Heart left ventricle (tissue), 16 donors: ENCODE measurements at regions of chr9 and their contacts with region 1.

Region 1: DNA sequence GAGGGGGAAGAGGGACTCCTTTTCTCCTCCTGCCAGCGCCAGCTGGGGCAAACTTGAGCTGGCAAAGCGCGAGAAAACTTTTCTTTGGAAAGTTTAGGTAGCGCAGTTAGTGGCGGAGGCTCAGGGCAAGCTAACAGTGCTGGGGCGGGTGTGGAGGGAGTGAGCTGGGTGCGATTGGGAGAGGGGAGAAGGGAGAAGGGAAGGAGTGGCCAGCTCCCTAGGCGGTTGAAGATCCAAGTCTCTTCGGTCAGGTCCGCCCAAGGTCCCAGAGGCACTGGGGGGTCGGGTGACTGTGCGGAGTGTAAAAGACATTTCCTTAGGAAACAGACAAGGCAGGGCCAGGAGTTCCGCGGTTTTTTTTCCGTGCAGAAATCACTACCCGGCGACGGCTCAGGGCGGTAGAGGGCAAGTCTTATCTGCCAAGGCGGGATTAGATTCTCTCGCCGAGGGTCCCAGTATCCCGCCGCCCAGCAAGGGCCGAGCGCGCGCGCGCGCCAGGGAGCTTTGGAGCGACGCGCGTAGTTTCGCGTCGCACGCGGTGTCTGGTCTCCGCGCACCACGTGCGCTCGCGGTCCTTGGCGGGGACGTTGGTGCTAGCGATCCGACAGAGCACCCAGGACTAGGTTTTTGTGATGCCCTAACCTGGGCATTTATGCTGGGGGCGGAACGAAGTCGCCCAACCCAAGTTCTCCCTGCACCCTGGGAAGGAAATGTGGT is 33.6 kb upstream of the NFIB start:
- DNase-seq: peak; percentile 63 to 76 (median 69)
- ATAC-seq: peak; percentile 36 to 59 (median 50)
- H3K4me3 ChIP-seq: peak overlapping the region; percentile 41 to 72 (median 59)
- H3K27ac ChIP-seq: peak overlapping the region; percentile 76 to 94 (median 87)
- H3K4me1 ChIP-seq: peaks cover 11 to 73% (median 42%) of the 10 kb centered on the region in 12 donors
- H3K27me3 ChIP-seq: peaks cover 0 to 50% (median 0%) of the 10 kb centered on the region in 9 donors
- CTCF ChIP-seq: peak in 3 of 12 donors; percentile 19 to 52 (median 52)
- POLR2A ChIP-seq: peak in 1 of 2 donors; percentile 52

Region 2: DNA sequence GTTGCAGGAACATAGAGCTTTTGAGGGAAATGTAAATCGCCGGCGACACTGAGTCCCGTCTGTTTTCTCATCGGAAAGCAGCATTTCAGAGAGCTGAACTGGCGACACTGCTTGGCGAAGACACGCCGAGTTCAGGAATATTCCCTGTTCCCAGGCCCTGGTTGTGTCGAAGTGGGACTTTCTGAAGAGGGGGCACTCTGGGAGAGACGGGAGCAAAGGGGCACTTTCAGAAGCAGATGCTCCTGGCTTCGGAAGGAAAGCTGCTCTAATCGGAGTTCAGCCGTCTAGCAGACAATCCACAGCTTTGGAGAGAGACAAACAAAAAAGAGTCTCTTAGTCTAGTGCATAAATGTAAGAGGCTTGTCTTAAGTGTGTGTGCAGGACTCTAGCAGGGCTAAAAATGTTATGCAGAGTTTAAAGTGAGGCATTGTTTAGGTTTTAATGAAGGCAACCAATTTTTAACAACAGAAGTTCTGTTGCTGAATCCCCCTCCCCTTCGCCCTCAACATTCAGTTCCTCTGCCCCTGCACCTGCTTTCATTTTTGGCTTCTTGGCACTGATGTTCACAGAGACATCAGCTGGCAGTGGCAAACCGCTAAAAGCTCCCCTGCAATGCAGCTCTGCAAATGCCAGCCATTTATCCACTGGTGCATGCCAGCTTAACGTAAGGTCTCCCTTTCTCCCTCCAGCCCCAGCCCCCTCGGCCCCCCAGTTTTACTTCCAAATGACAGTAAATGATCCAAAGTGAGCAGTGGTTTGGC is 778.5 kb before region 1 on chr9:
- intact Hi-C with region 1: loop called in 2 of 10 experiments (anchors 10 kb)
- DNase-seq: peak in 3 of 5 donors; percentile 30 to 55 (median 34)
- ATAC-seq: peak; percentile 25 to 49 (median 29)
- H3K4me3 ChIP-seq: peak overlapping the region in 10 of 12 donors; percentile 21 to 46 (median 35)
- H3K27ac ChIP-seq: peak overlapping the region; percentile 53 to 92 (median 82)
- H3K4me1 ChIP-seq: peaks cover 0 to 46% (median 31%) of the 10 kb centered on the region in 12 donors
- H3K27me3 ChIP-seq: no peaks in the 10 kb centered on the region
- CTCF ChIP-seq: no peak
- POLR2A ChIP-seq: no peak

Region 3: DNA sequence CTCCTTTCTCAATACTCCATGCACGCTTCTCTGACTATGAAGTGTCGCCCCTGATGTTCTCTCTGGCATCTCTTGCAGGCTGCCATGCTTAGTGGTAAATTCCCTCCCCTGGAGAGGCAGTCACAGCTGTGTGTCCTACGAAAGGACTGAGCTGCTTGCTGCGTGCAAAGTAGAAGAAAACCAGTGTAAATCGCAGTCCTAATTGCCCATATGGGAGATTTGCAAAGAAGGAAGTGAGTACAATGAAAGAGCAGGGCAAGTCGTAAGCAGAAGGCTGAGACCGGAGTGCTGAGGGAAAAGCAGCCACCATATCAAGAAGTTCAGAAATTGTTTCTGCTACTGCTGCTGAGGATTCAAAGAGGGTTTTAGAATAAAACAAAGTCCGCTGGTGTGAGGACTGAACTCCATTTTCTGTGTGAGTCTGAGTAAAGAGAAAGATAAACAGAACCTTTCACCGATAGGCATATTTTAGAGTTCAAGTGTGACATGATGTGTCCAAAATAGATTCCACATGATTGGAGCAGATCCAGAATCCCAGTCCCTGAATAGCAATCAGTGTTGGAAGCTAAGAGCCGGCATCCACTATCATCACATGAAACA is 560.2 kb before region 1 on chr9:
- intact Hi-C with region 1: loop called in 2 of 10 experiments (anchors 10 kb)
- DNase-seq: peak in 3 of 5 donors; percentile 43 to 73 (median 61)
- ATAC-seq: peak; percentile 72 to 92 (median 88)
- H3K4me3 ChIP-seq: peak overlapping the region in 10 of 12 donors; percentile 5 to 50 (median 31)
- H3K27ac ChIP-seq: peak overlapping the region; percentile 81 to 95 (median 88)
- H3K4me1 ChIP-seq: peaks cover 0 to 43% (median 21%) of the 10 kb centered on the region in 12 donors
- H3K27me3 ChIP-seq: no peaks in the 10 kb centered on the region
- CTCF ChIP-seq: no peak
- POLR2A ChIP-seq: no peak

Region 4: DNA sequence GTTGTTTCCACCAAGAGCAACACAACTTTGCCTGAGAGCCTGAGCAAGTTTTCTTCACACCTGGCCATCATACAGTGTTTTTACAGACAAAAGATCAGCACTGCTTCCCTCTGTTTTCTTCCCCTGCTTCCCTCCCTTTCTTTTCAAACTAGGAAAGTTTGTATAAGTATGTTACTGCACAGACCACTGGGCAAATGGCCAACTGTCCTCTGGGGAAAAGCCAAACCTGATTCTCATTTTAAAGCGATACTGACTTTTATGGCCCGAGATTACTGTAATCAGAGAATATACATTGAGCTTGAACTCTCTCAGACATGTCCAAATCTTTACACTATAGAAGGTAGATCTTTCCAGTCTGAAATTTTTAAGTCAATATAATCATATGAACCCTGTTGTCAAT is 448.6 kb before region 1 on chr9:
- intact Hi-C with region 1: loop called in 2 of 10 experiments (anchors 5 kb)
- DNase-seq: peak in 4 of 5 donors; percentile 30 to 44 (median 36)
- ATAC-seq: no peak
- H3K4me3 ChIP-seq: no peak overlapping the region
- H3K27ac ChIP-seq: peak overlapping the region in 11 of 12 donors; percentile 42 to 84 (median 66)
- H3K4me1 ChIP-seq: peaks cover 6 to 66% (median 24%) of the 10 kb centered on the region in 12 donors
- H3K27me3 ChIP-seq: no peaks in the 10 kb centered on the region
- CTCF ChIP-seq: no peak
- POLR2A ChIP-seq: no peak

Region 5: DNA sequence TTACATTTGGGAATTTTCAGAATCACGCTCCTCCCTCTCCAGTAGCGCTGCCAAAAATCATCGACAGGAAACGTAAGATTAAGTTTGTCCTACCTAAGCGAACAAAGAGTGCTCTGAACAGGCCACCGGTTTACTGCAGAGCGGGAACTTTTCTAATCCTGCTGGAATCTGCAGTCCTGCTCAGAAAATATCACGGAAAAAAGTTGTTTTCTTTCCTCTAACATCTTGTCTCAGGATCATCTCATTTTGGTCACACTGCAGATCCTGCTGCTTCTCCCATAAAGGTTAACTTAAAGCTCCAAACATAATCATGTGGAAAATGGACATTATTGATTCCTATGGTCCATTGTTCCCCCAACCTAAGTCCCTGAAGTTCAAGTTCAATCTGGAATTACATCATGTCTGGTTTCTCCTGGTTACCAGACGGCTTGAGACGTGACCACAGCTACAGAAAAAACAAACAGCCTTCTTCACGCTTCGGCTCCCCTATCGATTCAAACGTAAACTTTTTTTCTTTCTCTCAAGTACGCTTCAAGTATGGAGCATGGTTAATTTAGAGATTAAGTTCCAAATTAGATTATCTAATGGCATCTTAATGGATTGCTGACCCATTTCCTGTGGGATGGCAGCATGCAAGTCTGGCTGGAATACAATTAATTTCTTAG is 251.2 kb before region 1 on chr9:
- intact Hi-C with region 1: loop called in 3 of 10 experiments (anchors 5 to 10 kb)
- DNase-seq: peak in 4 of 5 donors; percentile 40 to 53 (median 42)
- ATAC-seq: peak; percentile 81 to 87 (median 84)
- H3K4me3 ChIP-seq: peak overlapping the region in 10 of 12 donors; percentile 9 to 48 (median 32)
- H3K27ac ChIP-seq: peak overlapping the region; percentile 39 to 90 (median 82)
- H3K4me1 ChIP-seq: peaks cover 0 to 71% (median 49%) of the 10 kb centered on the region in 12 donors
- H3K27me3 ChIP-seq: no peaks in the 10 kb centered on the region
- CTCF ChIP-seq: no peak
- POLR2A ChIP-seq: no peak

Region 6: GRCh38 chr9:14271093-14271673 is 76.4 kb before region 1 on chr9:
- intact Hi-C with region 1: loop called in 1 of 10 experiments (anchors 10 kb)
- DNase-seq: peak; percentile 72 to 79 (median 77)
- ATAC-seq: peak; percentile 44 to 74 (median 60)
- H3K4me3 ChIP-seq: no peak overlapping the region
- H3K27ac ChIP-seq: peak overlapping the region in 10 of 12 donors; percentile 8 to 68 (median 44)
- H3K4me1 ChIP-seq: peaks cover 14 to 79% (median 63%) of the 10 kb centered on the region in 12 donors
- H3K27me3 ChIP-seq: no peaks in the 10 kb centered on the region
- CTCF ChIP-seq: no peak
- POLR2A ChIP-seq: no peak

Region 7: GRCh38 chr9:14322211-14323082 is 25.1 kb before region 1 on chr9:
- intact Hi-C with region 1: loop called (anchors 1 to 5 kb)
- DNase-seq: peak; percentile 94 to 96 (median 95)
- ATAC-seq: peak; percentile 86 to 96 (median 92)
- H3K4me3 ChIP-seq: peak overlapping the region; percentile 65 to 84 (median 78)
- H3K27ac ChIP-seq: peak overlapping the region; percentile 93 to 100 (median 98)
- H3K4me1 ChIP-seq: peaks cover 8 to 82% (median 44%) of the 10 kb centered on the region in 12 donors
- H3K27me3 ChIP-seq: peaks cover 0 to 6% (median 0%) of the 10 kb centered on the region in 9 donors
- CTCF ChIP-seq: peak; percentile 17 to 75 (median 60)
- POLR2A ChIP-seq: peak in 1 of 2 donors; percentile 55